ENCODE measurements at regions of chr1 and their contacts with region 1.

Region 1: GRCh38 chr1:8848663-8849386 is 29.7 kb downstream of the ENO1 start:
- DNase-seq: peak; percentile 66 to 80
- ATAC-seq: peak; percentile 83 to 92
- H3K4me3 ChIP-seq: no peak overlapping the region
- H3K27ac ChIP-seq: peak overlapping the region in 1 of 2 experiments; percentile 52; a peak in 2 of 6 replicates
- H3K4me1 ChIP-seq: peaks cover 4% of the 10 kb centered on the region; the same call in 1 of the 3 replicates
- CTCF ChIP-seq: peak; percentile 83
- EP300 ChIP-seq: no peak
- POLR2A ChIP-seq: no peak
- RAD21 ChIP-seq: peak; percentile 75 to 84

Region 2: GRCh38 chr1:8702850-8703810 is 145.7 kb before region 1 on chr1:
- CTCF ChIA-PET with region 1: interaction called, 10 read pairs
- POLR2A ChIA-PET with region 1: no interaction called
- DNase-seq: peak; percentile 74 to 92
- ATAC-seq: peak; percentile 86 to 96
- H3K4me3 ChIP-seq: peak overlapping the region; percentile 71
- H3K27ac ChIP-seq: peak overlapping the region; percentile 91 to 98
- H3K4me1 ChIP-seq: peaks cover 60% of the 10 kb centered on the region
- CTCF ChIP-seq: no peak
- EP300 ChIP-seq: no peak
- POLR2A ChIP-seq: peak; percentile 72
- RAD21 ChIP-seq: peak; percentile 11 to 47; a peak in 2 of 5 replicates

Region 3: DNA sequence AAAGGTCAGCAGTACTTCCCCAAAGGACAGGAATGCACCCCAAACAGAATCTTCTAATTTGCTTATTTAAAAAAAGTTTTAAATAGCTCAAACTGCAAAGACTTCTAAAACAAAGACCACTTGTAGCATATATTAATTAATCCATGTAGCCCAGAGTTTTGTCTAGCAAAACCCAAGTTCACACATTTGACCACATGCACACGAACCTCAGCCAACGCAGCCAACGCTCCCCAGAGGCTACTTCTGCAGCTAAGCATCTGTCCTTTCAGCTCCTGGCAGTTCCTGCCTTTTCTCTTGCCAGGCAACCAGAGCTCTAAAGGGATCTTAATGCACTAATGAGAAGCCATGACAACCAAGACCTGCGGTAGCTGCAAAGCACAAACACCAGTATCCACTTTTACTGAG is 121.0 kb before region 1 on chr1:
- CTCF ChIA-PET with region 1: interaction called, 13 read pairs
- POLR2A ChIA-PET with region 1: no interaction called
- DNase-seq: no peak
- ATAC-seq: no peak
- H3K4me3 ChIP-seq: no peak overlapping the region
- H3K27ac ChIP-seq: no peak overlapping the region
- H3K4me1 ChIP-seq: peaks cover 13% of the 10 kb centered on the region; the same call in 2 of the 3 replicates
- CTCF ChIP-seq: no peak
- EP300 ChIP-seq: no peak
- POLR2A ChIP-seq: no peak
- RAD21 ChIP-seq: no peak

Region 4: DNA sequence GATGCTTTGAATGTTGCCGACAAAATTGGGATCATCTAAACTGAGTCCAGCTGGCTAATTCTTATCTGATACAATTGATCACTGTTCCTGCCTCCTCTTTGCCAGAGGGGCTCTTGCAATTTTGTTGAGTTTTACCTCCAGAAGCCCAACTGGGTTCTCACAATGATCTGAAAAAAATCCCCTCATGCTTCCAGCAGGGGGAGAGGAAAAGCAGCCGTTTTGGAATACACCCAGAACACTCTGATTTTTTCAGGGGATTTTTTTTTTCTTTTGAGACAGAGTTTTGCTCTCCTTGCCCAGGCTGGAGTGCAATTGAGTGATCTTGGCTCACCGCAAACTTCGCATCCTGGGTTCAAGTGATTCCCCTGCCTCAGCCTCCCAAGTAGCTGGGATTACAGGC is 17.5 kb before region 1 on chr1:
- CTCF ChIA-PET with region 1: interaction called, 50 read pairs
- POLR2A ChIA-PET with region 1: no interaction called
- DNase-seq: no peak
- ATAC-seq: peak in 1 of 2 experiments; percentile 55; a peak in 2 of 6 replicates
- H3K4me3 ChIP-seq: no peak overlapping the region
- H3K27ac ChIP-seq: no peak overlapping the region
- H3K4me1 ChIP-seq: no peaks in the 10 kb centered on the region
- CTCF ChIP-seq: no peak
- EP300 ChIP-seq: no peak
- POLR2A ChIP-seq: no peak
- RAD21 ChIP-seq: no peak

Region 5: GRCh38 chr1:8947127-8947691 is 98.4 kb after region 1 on chr1:
- CTCF ChIA-PET with region 1: no interaction called
- POLR2A ChIA-PET with region 1: no interaction called
- DNase-seq: no peak
- ATAC-seq: no peak
- H3K4me3 ChIP-seq: no peak overlapping the region
- H3K27ac ChIP-seq: no peak overlapping the region
- H3K4me1 ChIP-seq: no peaks in the 10 kb centered on the region; the same call in 2 of the 3 replicates
- CTCF ChIP-seq: no peak
- EP300 ChIP-seq: no peak
- POLR2A ChIP-seq: no peak
- RAD21 ChIP-seq: no peak